ENCODE measurements at regions of chr13 and their contacts with region 1.

Region 1: GRCh38 chr13:52665325-52665724 is 12.7 kb downstream of the SUGT1 start:
- DNase-seq: no peak
- ATAC-seq: peak; percentile 60
- H3K4me3 Mint-ChIP-seq: no peak overlapping the region
- H3K27ac Mint-ChIP-seq: no peak overlapping the region
- H3K4me1 Mint-ChIP-seq: peaks cover 3% of the 10 kb centered on the region
- H3K27me3 Mint-ChIP-seq: no peaks in the 10 kb centered on the region

Region 2: DNA sequence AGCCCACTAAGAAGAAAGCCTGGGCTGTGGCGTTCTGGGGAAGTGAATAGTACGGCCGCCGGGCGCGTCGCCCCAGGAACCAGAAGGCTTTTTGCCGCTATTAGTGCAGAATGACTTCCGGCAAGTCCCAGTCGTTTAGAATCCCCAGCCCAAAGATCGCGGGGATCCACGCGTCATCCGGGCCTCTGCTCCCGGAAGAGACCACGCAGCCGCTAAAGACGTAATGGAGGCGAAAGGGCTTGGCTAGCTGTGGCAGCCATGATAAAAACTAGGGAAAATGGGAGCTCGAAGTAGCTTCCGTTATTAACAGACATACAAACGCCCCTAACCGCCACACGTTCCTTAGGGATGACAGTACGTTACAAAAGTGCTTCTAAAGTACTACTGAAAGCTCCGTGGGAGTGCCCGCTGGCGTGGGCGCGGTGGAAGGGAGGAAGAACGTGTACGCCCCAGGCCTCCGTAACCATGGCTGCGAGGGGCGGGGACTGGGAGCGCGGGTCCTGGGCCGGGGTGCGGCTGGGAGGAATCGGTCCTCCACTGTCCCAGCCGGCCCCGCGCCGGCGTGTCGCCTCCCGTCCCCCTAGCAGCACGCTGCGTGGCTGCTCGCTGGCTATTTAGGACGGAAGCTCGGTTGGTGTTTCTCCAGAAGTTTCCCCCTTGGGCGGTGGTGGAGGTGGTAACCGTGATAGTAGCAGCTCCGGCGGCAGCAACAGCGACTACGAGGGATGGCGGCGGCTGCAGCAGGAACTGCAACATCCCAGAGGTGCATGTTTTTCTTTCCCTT is 12.9 kb before region 1 on chr13 and contains the start of gene SUGT1:
- CTCF ChIA-PET with region 1: interaction called, 28 read pairs
- DNase-seq: peak; percentile 98
- ATAC-seq: peak; percentile 95
- H3K4me3 Mint-ChIP-seq: no peak within 1 kb of the TSS
- H3K27ac Mint-ChIP-seq: no peak within 1 kb of the TSS
- H3K4me1 Mint-ChIP-seq: peaks cover 7% of the 10 kb centered on the region
- H3K27me3 Mint-ChIP-seq: no peaks in the 10 kb centered on the region
- total RNA-seq, gene SUGT1: 42.8 to 51.8 TPM

Region 3: DNA sequence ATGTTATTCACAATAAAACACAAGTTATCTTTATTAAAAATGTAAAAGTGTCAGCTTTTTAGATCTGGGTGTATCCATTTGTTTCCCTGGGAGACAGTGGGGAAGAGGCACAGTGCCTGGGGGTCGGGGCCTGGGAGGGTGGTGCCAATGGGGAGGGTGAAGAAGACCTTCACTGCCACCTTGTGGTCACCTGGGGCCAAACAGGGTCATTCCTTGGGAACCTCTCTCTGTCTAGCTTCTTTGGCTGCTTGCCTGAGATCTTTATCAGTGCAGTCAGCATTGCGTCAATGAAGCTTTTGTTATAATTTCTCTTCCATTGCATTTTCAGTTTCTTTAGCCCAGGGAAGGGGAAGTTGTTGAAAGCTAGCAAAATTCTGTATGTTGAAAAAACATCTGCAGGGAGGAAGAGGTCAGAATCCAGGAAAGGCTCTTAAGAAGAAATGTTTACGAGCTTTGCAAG is 144.0 kb after region 1 on chr13:
- CTCF ChIA-PET with region 1: interaction called, 10 read pairs
- DNase-seq: peak; percentile 65
- ATAC-seq: peak; percentile 63
- H3K4me3 Mint-ChIP-seq: no peak overlapping the region
- H3K27ac Mint-ChIP-seq: no peak overlapping the region
- H3K4me1 Mint-ChIP-seq: peaks cover 5% of the 10 kb centered on the region
- H3K27me3 Mint-ChIP-seq: peaks cover 19% of the 10 kb centered on the region

Region 4: GRCh38 chr13:52968074-52968700 is 302.9 kb after region 1 on chr13:
- CTCF ChIA-PET with region 1: interaction called, 13 read pairs
- DNase-seq: peak; percentile 73
- ATAC-seq: peak; percentile 80
- H3K4me3 Mint-ChIP-seq: no peak overlapping the region
- H3K27ac Mint-ChIP-seq: no peak overlapping the region
- H3K4me1 Mint-ChIP-seq: no peaks in the 10 kb centered on the region
- H3K27me3 Mint-ChIP-seq: peaks cover 3% of the 10 kb centered on the region